ENCODE measurements at regions of chr3 and their contacts with region 1.

Region 1: DNA sequence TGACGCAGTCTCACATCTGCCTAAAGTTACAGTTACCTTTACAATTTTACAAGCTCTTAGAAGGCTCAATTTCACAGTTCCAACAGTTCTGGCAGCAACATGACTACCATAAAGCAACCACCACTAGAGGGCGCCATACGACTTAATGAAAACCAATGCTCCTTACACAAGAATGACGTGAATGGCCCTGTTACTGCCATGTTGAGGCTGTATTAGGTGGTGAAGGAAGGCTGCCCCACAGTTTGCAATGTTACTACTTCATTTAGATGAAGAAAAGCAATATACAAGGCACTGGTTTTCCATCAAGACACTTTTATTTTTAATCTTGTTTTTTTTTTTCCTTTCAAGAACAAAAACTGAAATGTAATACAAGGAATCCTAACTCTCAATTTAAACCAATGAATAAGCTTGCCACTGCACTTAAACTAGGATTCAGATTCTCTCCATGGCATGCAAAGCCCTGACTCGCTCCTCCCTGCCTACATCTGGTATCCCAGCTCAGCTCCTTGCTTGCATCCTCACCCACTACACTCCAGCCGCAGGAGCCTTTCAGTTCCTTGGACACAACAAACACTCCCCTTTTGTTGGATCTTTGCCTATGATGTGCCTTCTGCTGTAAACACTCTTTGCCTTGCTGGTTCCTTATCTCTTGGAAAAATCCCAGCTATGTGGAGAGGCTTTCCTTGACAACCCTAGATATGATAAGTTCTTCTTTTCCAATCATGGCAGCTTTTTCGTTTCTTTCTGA is 270.7 kb downstream of the GBE1 start:
- DNase-seq: peak; percentile 85
- H3K4me3 ChIP-seq: no peak overlapping the region
- H3K4me3 Mint-ChIP-seq: peak overlapping the region; percentile 69
- H3K27ac Mint-ChIP-seq: peak overlapping the region; percentile 94
- H3K4me1 ChIP-seq: peaks cover 11% of the 10 kb centered on the region
- H3K4me1 Mint-ChIP-seq: peaks cover 9% of the 10 kb centered on the region
- H3K27me3 ChIP-seq: no peaks in the 10 kb centered on the region
- H3K27me3 Mint-ChIP-seq: no peaks in the 10 kb centered on the region
- CTCF ChIP-seq: peak; percentile 74 to 75

Region 2: GRCh38 chr3:81419228-81419627 is 71.5 kb before region 1 on chr3:
- CTCF ChIA-PET with region 1: interaction called, 3 read pairs
- POLR2A ChIA-PET with region 1: no interaction called
- intact Hi-C with region 1: loop called (anchors 1 kb)
- DNase-seq: no peak
- H3K4me3 ChIP-seq: no peak overlapping the region
- H3K4me3 Mint-ChIP-seq: no peak overlapping the region
- H3K27ac Mint-ChIP-seq: no peak overlapping the region
- H3K4me1 ChIP-seq: no peaks in the 10 kb centered on the region
- H3K4me1 Mint-ChIP-seq: no peaks in the 10 kb centered on the region
- H3K27me3 ChIP-seq: no peaks in the 10 kb centered on the region
- H3K27me3 Mint-ChIP-seq: no peaks in the 10 kb centered on the region
- CTCF ChIP-seq: peak in 1 of 2 experiments; percentile 41

Region 3: GRCh38 chr3:81443958-81444357 is 46.8 kb before region 1 on chr3:
- CTCF ChIA-PET with region 1: no interaction called
- POLR2A ChIA-PET with region 1: no interaction called
- intact Hi-C with region 1: no loop called
- DNase-seq: no peak
- H3K4me3 ChIP-seq: no peak overlapping the region
- H3K4me3 Mint-ChIP-seq: no peak overlapping the region
- H3K27ac Mint-ChIP-seq: no peak overlapping the region
- H3K4me1 ChIP-seq: no peaks in the 10 kb centered on the region
- H3K4me1 Mint-ChIP-seq: no peaks in the 10 kb centered on the region
- H3K27me3 ChIP-seq: no peaks in the 10 kb centered on the region
- H3K27me3 Mint-ChIP-seq: no peaks in the 10 kb centered on the region
- CTCF ChIP-seq: no peak

Region 4: DNA sequence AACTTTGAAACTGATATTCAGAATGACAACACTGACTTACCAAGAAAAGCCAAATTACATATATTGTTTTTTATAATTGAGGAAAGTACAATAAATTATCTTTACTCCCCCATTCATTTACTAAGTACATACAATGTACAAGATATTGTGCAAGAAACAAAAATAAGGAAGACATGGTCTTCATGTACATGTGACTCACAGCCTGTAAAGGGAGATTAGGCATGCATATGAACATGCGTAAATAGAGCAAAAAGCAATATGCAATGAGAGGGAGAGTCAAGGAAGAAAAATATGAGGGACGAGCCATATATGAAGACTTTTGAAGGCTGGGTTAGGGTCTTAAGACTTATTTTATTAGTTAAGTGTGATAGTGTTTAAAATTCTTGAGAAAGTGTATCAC is 12.3 kb after region 1 on chr3:
- CTCF ChIA-PET with region 1: no interaction called
- POLR2A ChIA-PET with region 1: no interaction called
- intact Hi-C with region 1: no loop called
- DNase-seq: no peak
- H3K4me3 ChIP-seq: no peak overlapping the region
- H3K4me3 Mint-ChIP-seq: no peak overlapping the region
- H3K27ac Mint-ChIP-seq: no peak overlapping the region
- H3K4me1 ChIP-seq: no peaks in the 10 kb centered on the region
- H3K4me1 Mint-ChIP-seq: no peaks in the 10 kb centered on the region
- H3K27me3 ChIP-seq: no peaks in the 10 kb centered on the region
- H3K27me3 Mint-ChIP-seq: no peaks in the 10 kb centered on the region
- CTCF ChIP-seq: no peak

Region 5: GRCh38 chr3:81581966-81582599 is 91.4 kb after region 1 on chr3:
- CTCF ChIA-PET with region 1: no interaction called
- POLR2A ChIA-PET with region 1: no interaction called
- intact Hi-C with region 1: loop called (anchors 1 kb)
- DNase-seq: peak; percentile 33 to 51
- H3K4me3 ChIP-seq: no peak overlapping the region
- H3K4me3 Mint-ChIP-seq: no peak overlapping the region
- H3K27ac Mint-ChIP-seq: no peak overlapping the region
- H3K4me1 ChIP-seq: no peaks in the 10 kb centered on the region
- H3K4me1 Mint-ChIP-seq: peaks cover 7% of the 10 kb centered on the region
- H3K27me3 ChIP-seq: no peaks in the 10 kb centered on the region
- H3K27me3 Mint-ChIP-seq: no peaks in the 10 kb centered on the region
- CTCF ChIP-seq: peak; percentile 54 to 79

Region 6: GRCh38 chr3:81760924-81761903 is 270.5 kb after region 1 on chr3 and contains the start of gene GBE1:
- CTCF ChIA-PET with region 1: no interaction called
- POLR2A ChIA-PET with region 1: no interaction called
- intact Hi-C with region 1: loop called (anchors 5 kb)
- DNase-seq: peak; percentile 90 to 94
- H3K4me3 ChIP-seq: peak within 1 kb of the TSS; percentile 86
- H3K4me3 Mint-ChIP-seq: peak within 1 kb of the TSS; percentile 82
- H3K27ac Mint-ChIP-seq: peak within 1 kb of the TSS; percentile 91
- H3K4me1 ChIP-seq: no peaks in the 10 kb centered on the region; the same call in 1 of the 2 replicates
- H3K4me1 Mint-ChIP-seq: peaks cover 5% of the 10 kb centered on the region
- H3K27me3 ChIP-seq: no peaks in the 10 kb centered on the region
- H3K27me3 Mint-ChIP-seq: no peaks in the 10 kb centered on the region
- CTCF ChIP-seq: peak in 1 of 2 experiments; percentile 20
- total RNA-seq, gene GBE1: 8.1 and 8.2 TPM in 2 replicates

Region 7: GRCh38 chr3:81968628-81969027 is 477.9 kb after region 1 on chr3:
- CTCF ChIA-PET with region 1: no interaction called
- POLR2A ChIA-PET with region 1: no interaction called
- intact Hi-C with region 1: no loop called
- DNase-seq: no peak
- H3K4me3 ChIP-seq: no peak overlapping the region
- H3K4me3 Mint-ChIP-seq: no peak overlapping the region
- H3K27ac Mint-ChIP-seq: no peak overlapping the region
- H3K4me1 ChIP-seq: no peaks in the 10 kb centered on the region
- H3K4me1 Mint-ChIP-seq: no peaks in the 10 kb centered on the region
- H3K27me3 ChIP-seq: no peaks in the 10 kb centered on the region
- H3K27me3 Mint-ChIP-seq: no peaks in the 10 kb centered on the region
- CTCF ChIP-seq: no peak